A673 (cell line): ENCODE measurements at regions of chr12 and their contacts with region 1.

Region 1: DNA sequence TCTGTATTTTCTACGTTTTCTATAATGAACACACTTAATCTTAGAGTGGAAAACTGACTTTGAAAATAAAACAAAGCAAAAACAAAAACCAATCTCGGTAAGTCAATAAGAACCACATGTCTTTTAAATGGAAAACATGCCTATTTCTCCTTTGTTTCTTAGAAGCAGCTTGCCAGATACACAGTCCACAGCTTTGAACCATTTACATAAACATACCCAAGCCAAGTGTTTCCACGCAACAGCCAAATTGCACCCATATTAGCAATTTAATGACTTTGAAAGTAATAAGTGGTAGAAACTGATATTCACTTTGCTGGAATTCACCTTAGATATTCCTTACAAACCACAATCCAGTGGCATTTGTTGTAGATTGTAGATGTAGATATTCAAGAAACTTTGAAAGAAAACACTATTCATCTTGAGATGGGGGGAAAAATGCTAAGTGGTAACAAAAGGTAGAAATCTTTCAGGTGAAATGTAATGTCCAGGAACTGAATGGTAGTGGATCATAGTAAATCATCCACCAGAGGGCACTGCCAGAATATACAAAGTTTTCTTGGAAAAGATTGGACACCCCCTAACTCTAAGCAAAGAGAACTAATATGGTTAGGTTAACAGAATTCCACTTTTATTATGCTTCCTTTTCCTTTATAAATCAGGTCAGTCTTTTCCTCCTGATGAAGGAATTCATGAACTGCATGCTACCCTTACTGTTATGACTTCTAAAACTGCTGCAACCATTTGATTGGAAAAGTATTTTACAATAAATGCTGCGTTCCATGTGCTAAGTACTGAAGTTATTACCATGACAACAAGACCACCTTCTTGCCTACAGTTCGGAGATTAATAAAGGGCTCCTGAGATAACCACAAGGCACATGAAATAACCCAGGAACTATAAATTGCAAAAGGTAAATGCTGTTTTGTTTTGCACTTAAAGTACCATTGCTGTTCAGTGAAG is 69.8 kb downstream of the RERG start:
- DNase-seq: peak; percentile 44
- H3K4me3 ChIP-seq: no peak overlapping the region
- H3K27ac ChIP-seq: no peak overlapping the region
- H3K4me1 ChIP-seq: peaks cover 7% of the 10 kb centered on the region
- H3K27me3 ChIP-seq: no peaks in the 10 kb centered on the region
- CTCF ChIP-seq: peak; percentile 64

Region 2: DNA sequence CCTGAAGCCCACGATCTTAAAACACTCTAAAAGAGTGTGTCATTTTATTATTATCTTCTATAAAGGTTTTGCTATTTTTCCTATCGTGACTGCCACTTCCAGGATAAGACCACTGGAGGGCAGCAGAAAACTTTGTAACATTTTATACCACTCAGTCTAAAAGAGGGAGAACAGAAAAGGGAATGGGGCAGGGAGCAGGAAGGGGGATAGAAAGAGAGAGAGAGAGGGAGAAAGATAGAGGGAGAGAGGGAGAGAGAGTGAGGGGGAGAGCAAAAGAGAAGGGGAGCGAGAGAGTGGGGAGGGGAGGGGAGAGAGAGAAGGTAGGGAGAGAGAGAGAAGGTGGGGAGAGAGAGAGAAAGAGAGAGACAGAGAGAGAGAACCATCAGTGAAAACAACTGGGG is 306.1 kb before region 1 on chr12:
- CTCF ChIA-PET with region 1: no interaction called
- POLR2A ChIA-PET with region 1: no interaction called
- intact Hi-C with region 1: loop called (anchors 10 kb)
- DNase-seq: peak; percentile 79
- H3K4me3 ChIP-seq: no peak overlapping the region
- H3K27ac ChIP-seq: no peak overlapping the region
- H3K4me1 ChIP-seq: no peaks in the 10 kb centered on the region
- H3K27me3 ChIP-seq: no peaks in the 10 kb centered on the region
- CTCF ChIP-seq: peak; percentile 84